ENCODE measurements at regions of chr18 and their contacts with region 1.

Region 1: GRCh38 chr18:35811896-35812295 is 160.6 kb upstream of the RMP24 start:
- DNase-seq: peak; percentile 78 to 95 (median 91)
- H3K4me3 ChIP-seq: no peak overlapping the region
- H3K4me3 Mint-ChIP-seq: peak overlapping the region in 1 of 2 donors; percentile 62
- H3K27ac ChIP-seq: peak overlapping the region in 1 of 2 donors; percentile 77
- H3K27ac Mint-ChIP-seq: peak overlapping the region; percentile 89 to 98 (median 95)
- H3K4me1 ChIP-seq: peaks cover 46 to 50% of the 10 kb centered on the region in 2 donors
- H3K4me1 Mint-ChIP-seq: peaks cover 60% of the 10 kb centered on the region
- H3K27me3 ChIP-seq: no peaks in the 10 kb centered on the region
- H3K27me3 Mint-ChIP-seq: peaks cover 2 to 8% (median 4%) of the 10 kb centered on the region in 3 donors
- CTCF ChIP-seq: no peak

Region 2: DNA sequence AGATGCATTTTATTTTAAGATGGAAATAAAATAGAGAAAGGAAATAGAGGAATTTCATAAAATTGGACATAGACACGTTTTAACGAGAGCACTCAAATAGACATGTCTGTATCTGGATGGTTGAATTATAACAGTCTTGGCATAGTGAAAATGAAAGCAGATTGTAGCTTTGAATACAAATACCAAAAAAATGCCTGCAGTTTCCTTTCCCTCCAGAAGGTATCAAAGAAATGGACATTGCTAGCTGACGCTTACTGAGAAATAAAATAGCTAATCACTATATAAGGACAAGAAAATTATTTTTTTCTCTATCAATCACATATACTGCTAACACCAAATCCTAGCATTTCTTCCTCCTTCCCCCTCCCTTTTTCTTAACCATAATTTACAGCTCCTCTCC is 782.1 kb before region 1 on chr18:
- intact Hi-C with region 1: loop called in 1 of 2 experiments (anchors 10 kb)
- DNase-seq: peak in 1 of 3 donors; percentile 34
- H3K4me3 ChIP-seq: peak overlapping the region; percentile 34 to 91 (median 78)
- H3K4me3 Mint-ChIP-seq: peak overlapping the region; percentile 81 to 92
- H3K27ac ChIP-seq: peak overlapping the region in 1 of 2 donors; percentile 82
- H3K27ac Mint-ChIP-seq: peak overlapping the region; percentile 60 to 95 (median 83)
- H3K4me1 ChIP-seq: peaks cover 11 to 15% of the 10 kb centered on the region in 2 donors
- H3K4me1 Mint-ChIP-seq: peaks cover 18% of the 10 kb centered on the region
- H3K27me3 ChIP-seq: no peaks in the 10 kb centered on the region
- H3K27me3 Mint-ChIP-seq: peaks cover 0 to 3% (median 0%) of the 10 kb centered on the region in 3 donors
- CTCF ChIP-seq: peak; percentile 21

Measured in CD14-positive monocyte (primary cell).